Kidney (tissue), 22 donors: ENCODE measurements at regions of chr18 and their contacts with region 1.

Region 1: GRCh38 chr18:12659904-12660605 is 2.1 kb upstream of the SPIRE1 start:
- DNase-seq: peak in 3 of 5 donors; percentile 60 to 87 (median 81)
- H3K4me3 ChIP-seq: no peak overlapping the region
- H3K27ac ChIP-seq: no peak overlapping the region
- H3K4me1 ChIP-seq: no peaks in the 10 kb centered on the region
- H3K27me3 ChIP-seq: no peaks in the 10 kb centered on the region
- CTCF ChIP-seq: peak; percentile 86

Region 2: GRCh38 chr18:12391618-12392165 is 268.4 kb before region 1 on chr18:
- intact Hi-C with region 1: loop called (anchors 5 kb)
- DNase-seq: peak in 3 of 5 donors; percentile 69 to 82 (median 75)
- H3K4me3 ChIP-seq: no peak overlapping the region
- H3K27ac ChIP-seq: no peak overlapping the region
- H3K4me1 ChIP-seq: no peaks in the 10 kb centered on the region
- H3K27me3 ChIP-seq: no peaks in the 10 kb centered on the region
- CTCF ChIP-seq: peak; percentile 86

Region 3: DNA sequence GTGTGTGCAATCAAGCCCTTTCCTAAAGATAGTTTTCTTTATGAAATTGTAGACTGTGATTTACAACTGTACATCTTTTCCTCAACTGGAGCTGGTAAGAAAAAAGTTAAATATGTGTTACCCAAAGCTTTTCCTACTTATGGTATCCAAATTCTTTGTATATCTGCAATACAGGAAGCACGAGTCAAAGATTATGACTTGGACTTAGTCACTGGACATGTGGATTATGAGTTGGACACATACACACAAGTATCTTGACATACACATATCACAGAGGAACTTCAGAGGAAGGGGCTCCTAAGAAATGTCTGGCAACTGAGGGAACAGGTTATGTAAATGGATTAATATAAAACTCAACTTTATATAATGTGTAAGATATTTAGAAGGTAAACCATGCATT is 217.1 kb before region 1 on chr18:
- intact Hi-C with region 1: no loop called
- DNase-seq: no peak
- H3K4me3 ChIP-seq: no peak overlapping the region
- H3K27ac ChIP-seq: no peak overlapping the region
- H3K4me1 ChIP-seq: no peaks in the 10 kb centered on the region
- H3K27me3 ChIP-seq: no peaks in the 10 kb centered on the region
- CTCF ChIP-seq: no peak

Region 4: DNA sequence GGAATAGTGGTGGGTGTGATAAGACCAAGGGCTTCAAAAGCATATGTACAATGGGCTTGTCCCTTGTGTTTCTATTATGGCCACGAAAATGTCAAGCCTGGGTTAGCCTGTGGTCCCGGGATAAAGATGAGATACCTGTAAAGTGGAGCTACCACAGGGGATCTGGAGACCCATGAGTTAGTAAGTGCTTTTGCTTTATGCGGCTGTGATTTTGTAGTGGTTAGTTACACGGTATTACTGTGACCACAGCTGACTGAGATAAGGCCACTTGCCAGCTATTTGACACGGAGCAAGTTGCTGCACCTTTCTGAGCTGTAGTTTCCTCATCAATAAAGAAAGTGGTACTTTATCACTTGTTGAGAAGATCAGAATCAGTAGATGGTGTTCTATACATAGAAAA is 153.0 kb before region 1 on chr18:
- intact Hi-C with region 1: no loop called
- DNase-seq: no peak
- H3K4me3 ChIP-seq: no peak overlapping the region
- H3K27ac ChIP-seq: no peak overlapping the region
- H3K4me1 ChIP-seq: no peaks in the 10 kb centered on the region
- H3K27me3 ChIP-seq: no peaks in the 10 kb centered on the region
- CTCF ChIP-seq: no peak

Region 5: DNA sequence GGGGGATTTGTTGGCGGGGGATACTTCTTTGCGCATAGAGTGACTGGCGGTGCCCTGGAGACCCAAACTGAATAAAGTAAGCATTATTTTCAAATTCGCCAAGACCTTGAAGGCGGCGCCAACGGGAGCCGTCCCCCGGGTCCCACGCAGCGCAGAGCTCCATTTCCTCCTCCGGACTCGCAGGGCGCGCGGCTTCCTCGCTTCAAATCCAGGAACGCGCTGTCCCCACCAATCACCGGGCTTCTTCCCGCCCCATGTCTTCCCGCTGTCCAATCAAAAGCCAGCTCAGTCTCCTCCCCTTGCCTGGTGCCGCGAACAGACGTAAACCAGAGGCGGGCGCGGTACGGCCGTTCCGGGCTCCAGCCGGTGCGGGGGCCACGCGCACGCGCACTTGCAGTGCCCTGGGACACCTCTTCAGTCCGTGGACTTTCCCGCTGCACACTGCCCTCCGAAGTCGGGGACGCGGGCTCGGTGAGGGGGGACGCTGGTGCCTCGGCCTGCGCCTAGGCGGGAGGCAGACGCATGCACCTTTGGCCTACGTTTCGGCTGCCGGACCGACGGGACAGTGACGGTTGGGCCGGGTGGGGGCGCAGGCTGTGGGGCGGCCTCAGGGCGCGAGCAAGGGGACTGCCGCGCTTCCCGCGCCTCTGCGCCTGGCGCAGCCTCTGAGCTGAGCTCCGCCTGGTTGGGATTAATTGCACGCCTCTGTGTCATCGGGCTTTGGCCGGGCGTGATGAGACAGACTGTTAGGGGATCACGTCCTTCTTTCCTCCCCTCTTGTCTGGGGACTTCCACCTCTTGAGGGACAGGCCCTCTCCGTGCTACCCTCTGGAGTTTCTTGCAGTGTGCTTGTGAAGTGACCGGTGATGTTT is 331.1 kb after region 1 on chr18 and contains the start of gene CEP192:
- intact Hi-C with region 1: no loop called
- DNase-seq: peak; percentile 99
- H3K4me3 ChIP-seq: peak within 1 kb of the TSS; percentile 86 to 98 (median 96)
- H3K27ac ChIP-seq: peak within 1 kb of the TSS; percentile 79 to 84
- H3K4me1 ChIP-seq: peaks cover 7 to 13% (median 12%) of the 10 kb centered on the region in 3 donors
- H3K27me3 ChIP-seq: no peaks in the 10 kb centered on the region
- CTCF ChIP-seq: no peak
- total RNA-seq, gene CEP192: 31.7 TPM